ENCODE measurements at regions of chr11 and their contacts with region 1.

Region 1: DNA sequence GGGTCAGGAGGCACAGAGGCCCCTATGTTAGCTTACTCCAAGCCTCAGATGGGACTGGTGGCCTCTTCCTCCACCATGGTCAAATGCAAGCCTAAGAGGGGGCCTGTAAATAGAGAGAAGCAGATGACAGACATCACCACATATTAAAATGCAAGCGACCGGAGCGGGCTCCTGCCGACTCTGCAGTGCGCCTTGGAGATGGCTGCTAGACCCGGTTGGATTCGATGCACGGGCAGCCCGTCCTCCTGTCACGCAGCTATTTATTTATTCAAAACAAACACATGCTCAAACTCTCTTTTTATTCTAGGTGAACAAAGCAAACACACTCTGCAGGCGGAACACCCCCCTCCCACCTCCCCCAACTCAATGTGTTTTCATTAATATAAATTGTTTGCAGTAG is 208.0 kb downstream of the DSCAML1 start:
- DNase-seq: no peak
- ATAC-seq: no peak
- H3K4me3 ChIP-seq: no peak overlapping the region
- H3K4me3 Mint-ChIP-seq: no peak overlapping the region
- H3K27ac ChIP-seq: no peak overlapping the region
- H3K27ac Mint-ChIP-seq: no peak overlapping the region
- H3K4me1 ChIP-seq: no peaks in the 10 kb centered on the region
- H3K4me1 Mint-ChIP-seq: no peaks in the 10 kb centered on the region
- H3K27me3 ChIP-seq: no peaks in the 10 kb centered on the region
- H3K27me3 Mint-ChIP-seq: peaks cover 4% of the 10 kb centered on the region
- CTCF ChIP-seq: no peak

Region 2: GRCh38 chr11:117572129-117572528 is 16.9 kb before region 1 on chr11:
- CTCF ChIA-PET with region 1: no interaction called
- POLR2A ChIA-PET with region 1: no interaction called
- intact Hi-C with region 1: loop called in 1 of 2 experiments (anchors 1 kb)
- DNase-seq: no peak
- ATAC-seq: no peak
- H3K4me3 ChIP-seq: no peak overlapping the region
- H3K4me3 Mint-ChIP-seq: no peak overlapping the region
- H3K27ac ChIP-seq: no peak overlapping the region
- H3K27ac Mint-ChIP-seq: no peak overlapping the region
- H3K4me1 ChIP-seq: no peaks in the 10 kb centered on the region
- H3K4me1 Mint-ChIP-seq: no peaks in the 10 kb centered on the region
- H3K27me3 ChIP-seq: no peaks in the 10 kb centered on the region
- H3K27me3 Mint-ChIP-seq: no peaks in the 10 kb centered on the region
- CTCF ChIP-seq: no peak

Region 3: GRCh38 chr11:117669062-117669461 is 80.0 kb after region 1 on chr11:
- CTCF ChIA-PET with region 1: no interaction called
- POLR2A ChIA-PET with region 1: no interaction called
- intact Hi-C with region 1: no loop called
- DNase-seq: no peak
- ATAC-seq: no peak
- H3K4me3 ChIP-seq: no peak overlapping the region
- H3K4me3 Mint-ChIP-seq: no peak overlapping the region
- H3K27ac ChIP-seq: no peak overlapping the region
- H3K27ac Mint-ChIP-seq: no peak overlapping the region
- H3K4me1 ChIP-seq: no peaks in the 10 kb centered on the region
- H3K4me1 Mint-ChIP-seq: no peaks in the 10 kb centered on the region
- H3K27me3 ChIP-seq: no peaks in the 10 kb centered on the region
- H3K27me3 Mint-ChIP-seq: peaks cover 4% of the 10 kb centered on the region
- CTCF ChIP-seq: no peak

Measured in CD8-positive, alpha-beta T cell (primary cell).